GM23248 (cell line): ENCODE measurements at regions of chr3 and their contacts with region 1.

Region 1: DNA sequence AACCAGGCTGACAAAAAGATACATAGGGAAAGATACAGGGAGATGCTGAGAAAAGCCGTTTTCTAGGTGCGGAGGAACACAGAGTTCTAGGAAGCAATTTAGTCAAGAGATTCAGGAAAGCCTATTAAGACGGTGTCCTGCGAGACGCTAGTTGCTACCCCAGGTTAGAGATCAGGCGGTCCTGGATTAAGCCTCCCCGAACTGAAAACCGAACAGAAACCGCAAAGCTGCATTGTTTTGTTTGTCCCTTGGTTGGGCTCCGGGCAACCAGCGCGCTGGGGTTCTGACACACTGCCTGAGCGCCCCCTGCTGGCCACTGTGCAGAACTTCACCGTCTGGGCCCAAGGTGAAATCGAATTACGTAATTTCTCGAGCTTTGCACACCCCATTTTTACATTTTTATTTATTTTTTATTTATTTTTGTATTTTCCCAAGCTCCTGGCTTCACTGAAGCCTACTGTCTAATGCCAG is 37.3 kb upstream of the NDUFB4 start:
- DNase-seq: peak; percentile 96
- H3K4me3 ChIP-seq: peak overlapping the region; percentile 85
- H3K27ac ChIP-seq: peak overlapping the region; percentile 88
- H3K4me1 ChIP-seq: peaks cover 26% of the 10 kb centered on the region
- H3K27me3 ChIP-seq: no peaks in the 10 kb centered on the region

Region 2: GRCh38 chr3:119600732-119601131 is 958.1 kb before region 1 on chr3:
- in situ Hi-C with region 1: no loop called
- DNase-seq: peak; percentile 25
- H3K4me3 ChIP-seq: no peak overlapping the region
- H3K27ac ChIP-seq: no peak overlapping the region
- H3K4me1 ChIP-seq: peaks cover 8% of the 10 kb centered on the region; the same call in 1 of the 2 replicates
- H3K27me3 ChIP-seq: no peaks in the 10 kb centered on the region

Region 3: DNA sequence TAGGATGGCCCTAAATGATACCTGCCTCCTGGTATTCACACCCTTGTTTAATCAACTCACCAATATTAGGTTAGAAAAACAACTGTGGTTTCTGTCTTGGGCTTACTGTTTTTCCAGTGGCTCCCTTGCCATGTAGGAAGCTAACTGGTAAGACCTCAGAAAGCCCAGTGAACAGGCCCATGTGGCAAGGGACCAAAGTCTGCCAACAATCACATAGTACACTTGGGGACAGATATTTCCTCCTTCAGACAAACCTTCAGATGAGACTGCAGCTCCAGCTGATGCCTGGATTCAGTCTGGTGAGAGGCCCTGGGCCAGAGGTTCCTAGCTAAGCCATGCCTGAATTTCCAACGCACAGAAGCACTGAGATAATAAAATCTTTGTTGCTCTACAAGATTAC is 560.6 kb before region 1 on chr3:
- in situ Hi-C with region 1: no loop called
- DNase-seq: no peak
- H3K4me3 ChIP-seq: no peak overlapping the region
- H3K27ac ChIP-seq: no peak overlapping the region
- H3K4me1 ChIP-seq: no peaks in the 10 kb centered on the region
- H3K27me3 ChIP-seq: no peaks in the 10 kb centered on the region

Region 4: GRCh38 chr3:120245386-120245785 is 313.4 kb before region 1 on chr3:
- in situ Hi-C with region 1: loop called (anchors 10 kb)
- DNase-seq: no peak
- H3K4me3 ChIP-seq: no peak overlapping the region
- H3K27ac ChIP-seq: no peak overlapping the region
- H3K4me1 ChIP-seq: no peaks in the 10 kb centered on the region
- H3K27me3 ChIP-seq: no peaks in the 10 kb centered on the region

Region 5: DNA sequence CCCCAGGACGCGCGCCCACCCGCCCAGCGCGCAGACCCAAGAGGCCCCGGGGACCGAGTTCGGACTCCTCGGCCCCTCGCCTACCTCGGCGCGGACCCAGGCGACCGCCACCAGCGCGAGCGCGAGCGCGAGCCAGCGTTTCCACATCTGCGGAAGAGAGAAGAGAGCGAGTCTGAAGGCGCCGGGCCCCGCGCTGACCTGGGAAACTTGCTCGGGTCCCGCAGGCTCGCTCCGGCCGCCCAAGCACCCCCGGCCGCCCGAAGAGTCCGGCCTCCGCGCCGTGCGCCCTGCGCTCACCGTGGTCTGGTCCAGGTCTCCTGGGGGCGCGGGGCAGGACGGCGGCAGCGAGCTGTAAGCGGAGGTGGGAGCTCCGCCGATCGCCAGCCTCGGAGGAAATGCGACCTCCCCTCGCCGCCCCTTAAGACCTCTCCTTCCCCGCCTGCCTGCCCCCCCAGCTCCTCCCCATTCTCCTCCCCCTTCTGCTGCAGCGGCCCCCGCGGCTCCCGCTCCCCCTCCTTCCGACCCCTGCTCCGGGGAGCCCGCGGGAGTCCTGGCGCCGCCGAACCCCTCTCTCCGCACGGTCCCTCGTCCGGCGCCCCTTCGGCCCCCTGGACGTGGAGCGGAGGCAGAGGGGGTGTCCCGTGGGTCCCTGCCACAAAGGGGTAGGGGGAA is 108.1 kb before region 1 on chr3 and contains the start of gene FSTL1:
- in situ Hi-C with region 1: loop called (anchors 10 kb)
- DNase-seq: peak; percentile 69
- H3K4me3 ChIP-seq: peak within 1 kb of the TSS; percentile 81
- H3K27ac ChIP-seq: peak within 1 kb of the TSS; percentile 84
- H3K4me1 ChIP-seq: peaks cover 26% of the 10 kb centered on the region
- H3K27me3 ChIP-seq: no peaks in the 10 kb centered on the region
- total RNA-seq, gene FSTL1: 4,171 and 4,244 TPM in 2 replicates

Region 6: DNA sequence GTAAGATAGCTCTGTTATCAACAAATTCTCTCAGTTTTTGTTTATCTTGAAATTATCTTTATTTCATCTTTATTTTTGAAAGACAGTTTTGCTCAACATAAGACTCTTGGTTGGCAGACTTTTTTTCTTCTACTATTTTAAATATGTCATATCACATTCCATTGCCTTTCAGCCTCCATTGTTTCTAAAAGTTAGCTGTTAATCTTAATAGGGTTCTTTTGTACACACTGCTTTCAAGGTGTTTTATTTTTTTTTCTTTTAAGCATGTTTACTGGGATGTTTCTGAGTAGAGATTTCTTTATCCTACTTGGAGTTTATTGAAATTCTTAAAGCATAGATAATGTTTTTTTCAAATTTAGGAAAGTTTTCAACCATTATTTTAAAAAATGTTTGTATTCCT is 643.8 kb after region 1 on chr3:
- in situ Hi-C with region 1: no loop called
- DNase-seq: no peak
- H3K4me3 ChIP-seq: no peak overlapping the region
- H3K27ac ChIP-seq: no peak overlapping the region
- H3K4me1 ChIP-seq: no peaks in the 10 kb centered on the region
- H3K27me3 ChIP-seq: no peaks in the 10 kb centered on the region